IMR-90 (cell line): ENCODE measurements at regions of chr10 and their contacts with region 1.

Region 1: GRCh38 chr10:87976101-87976743 is 112.8 kb downstream of the PTEN start:
- DNase-seq: peak; percentile 42
- ATAC-seq: no peak
- H3K4me3 ChIP-seq: no peak overlapping the region
- H3K27ac ChIP-seq: no peak overlapping the region
- H3K4me1 ChIP-seq: peaks cover 3% of the 10 kb centered on the region; the same call in 1 of the 2 replicates
- H3K27me3 ChIP-seq: no peaks in the 10 kb centered on the region; the same call in 1 of the 2 replicates
- CTCF ChIP-seq: no peak
- POLR2A ChIP-seq: no peak
- RAD21 ChIP-seq: no peak

Region 2: GRCh38 chr10:87700031-87700796 is 276.0 kb before region 1 on chr10:
- CTCF ChIA-PET with region 1: no interaction called
- POLR2A ChIA-PET with region 1: no interaction called
- dilution Hi-C with region 1: no loop called
- in situ Hi-C with region 1: no loop called
- intact Hi-C with region 1: no loop called
- DNase-seq: peak; percentile 74
- ATAC-seq: peak; percentile 58
- H3K4me3 ChIP-seq: no peak overlapping the region
- H3K27ac ChIP-seq: peak overlapping the region; percentile 57; the same call in 1 of the 2 replicates
- H3K4me1 ChIP-seq: peaks cover 10% of the 10 kb centered on the region
- H3K27me3 ChIP-seq: no peaks in the 10 kb centered on the region
- CTCF ChIP-seq: no peak
- POLR2A ChIP-seq: no peak
- RAD21 ChIP-seq: no peak

Region 3: DNA sequence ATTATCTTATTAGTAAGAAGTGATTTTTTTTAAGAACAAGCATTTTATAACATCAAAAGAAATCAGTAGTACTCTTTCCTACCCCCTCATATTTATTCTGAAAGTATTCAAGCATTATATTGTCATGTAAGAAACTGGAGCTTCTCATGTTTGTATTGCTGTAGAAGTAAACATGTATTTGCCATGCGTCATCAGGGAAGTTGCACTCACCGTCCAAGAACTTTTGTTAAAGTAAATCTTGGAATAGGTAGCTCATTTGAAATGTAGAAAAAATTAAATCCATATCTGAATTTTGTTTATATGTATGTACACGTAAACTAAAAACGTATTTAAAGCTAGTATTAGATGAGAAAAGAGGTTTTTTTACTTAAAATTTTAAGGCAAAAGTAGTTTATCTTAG is 16.0 kb before region 1 on chr10:
- CTCF ChIA-PET with region 1: no interaction called
- POLR2A ChIA-PET with region 1: no interaction called
- dilution Hi-C with region 1: no loop called
- in situ Hi-C with region 1: no loop called
- intact Hi-C with region 1: no loop called
- DNase-seq: peak; percentile 46
- ATAC-seq: no peak
- H3K4me3 ChIP-seq: no peak overlapping the region
- H3K27ac ChIP-seq: no peak overlapping the region
- H3K4me1 ChIP-seq: peaks cover 3% of the 10 kb centered on the region
- H3K27me3 ChIP-seq: no peaks in the 10 kb centered on the region
- CTCF ChIP-seq: no peak
- POLR2A ChIP-seq: no peak
- RAD21 ChIP-seq: no peak

Region 4: DNA sequence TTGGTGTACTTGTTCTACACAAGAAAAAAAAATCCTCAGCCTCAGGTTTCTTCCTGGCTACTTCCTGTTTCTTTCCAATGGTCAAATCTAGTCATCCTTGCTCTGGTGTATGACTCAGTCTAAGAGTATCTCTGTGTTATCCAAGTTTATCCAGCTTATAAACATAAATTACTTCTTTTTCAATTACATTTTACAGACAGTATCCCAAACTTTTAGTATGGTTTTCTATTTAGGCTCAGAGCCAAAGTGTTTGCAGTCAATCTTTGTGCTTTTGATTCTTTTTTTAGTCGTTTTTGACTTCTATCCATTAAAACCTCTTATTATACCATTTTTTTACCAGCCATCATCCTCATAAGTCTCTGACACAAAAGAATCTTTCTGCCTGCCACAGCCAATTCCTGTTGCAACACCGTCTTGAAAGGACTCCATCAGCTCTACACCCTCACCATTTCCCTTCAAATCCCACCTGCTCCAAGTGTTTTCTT is 181.8 kb after region 1 on chr10:
- CTCF ChIA-PET with region 1: no interaction called
- POLR2A ChIA-PET with region 1: no interaction called
- dilution Hi-C with region 1: no loop called
- in situ Hi-C with region 1: no loop called
- intact Hi-C with region 1: loop called (anchors 5 kb)
- DNase-seq: peak; percentile 96
- ATAC-seq: peak; percentile 73
- H3K4me3 ChIP-seq: no peak overlapping the region
- H3K27ac ChIP-seq: peak overlapping the region; percentile 83
- H3K4me1 ChIP-seq: peaks cover 21% of the 10 kb centered on the region
- H3K27me3 ChIP-seq: no peaks in the 10 kb centered on the region
- CTCF ChIP-seq: no peak
- POLR2A ChIP-seq: no peak
- RAD21 ChIP-seq: no peak